ENCODE measurements at regions of chr12 and their contacts with region 1.

Region 1: DNA sequence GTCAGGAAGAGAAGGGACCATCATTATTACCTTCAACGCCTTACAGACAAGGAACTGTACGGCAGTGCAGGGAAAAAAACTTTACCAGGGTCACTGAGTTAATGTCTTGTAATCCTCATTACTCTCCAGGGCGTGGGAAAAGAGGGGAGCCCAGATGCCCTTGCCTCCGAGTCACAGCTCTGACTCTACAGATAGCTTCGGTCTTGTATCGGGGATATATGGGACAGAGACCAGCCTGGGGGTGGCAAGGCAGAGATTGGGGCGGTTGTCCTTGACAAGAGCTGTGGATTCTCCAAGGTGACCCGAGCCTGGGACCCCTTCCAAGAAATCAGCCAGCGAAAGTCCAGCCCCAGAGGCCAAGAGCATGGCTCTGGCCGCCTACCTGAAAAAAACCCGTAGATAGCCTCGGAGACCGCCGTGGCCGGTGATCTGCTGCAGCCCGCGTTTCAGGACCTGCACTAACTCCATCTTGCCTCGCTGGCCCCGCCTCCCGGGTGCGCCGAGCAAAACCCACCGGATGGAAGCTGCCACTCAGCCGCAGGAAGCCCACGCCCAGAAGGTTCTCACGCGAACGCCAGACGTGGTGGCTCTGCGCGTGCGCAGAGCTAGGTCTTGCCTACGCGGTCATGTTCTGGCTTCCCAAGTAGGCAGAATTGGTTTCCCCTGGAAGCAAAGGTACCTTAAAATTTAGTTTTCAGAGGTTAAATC is at the start of gene NDUFA12:
- DNase-seq: peak; percentile 90 to 99 (median 93)
- ATAC-seq: peak; percentile 100
- H3K4me3 ChIP-seq: peak within 1 kb of the TSS; percentile 80
- H3K4me3 Mint-ChIP-seq: peak within 1 kb of the TSS; percentile 96
- H3K27ac ChIP-seq: peak within 1 kb of the TSS; percentile 66 to 76
- H3K27ac Mint-ChIP-seq: peak within 1 kb of the TSS; percentile 87
- H3K4me1 ChIP-seq: peaks cover 29% of the 10 kb centered on the region
- H3K4me1 Mint-ChIP-seq: peaks cover 55% of the 10 kb centered on the region
- H3K27me3 ChIP-seq: no peaks in the 10 kb centered on the region
- H3K27me3 Mint-ChIP-seq: no peaks in the 10 kb centered on the region
- CTCF ChIP-seq: no peak
- total RNA-seq, gene NDUFA12: 43.3 to 43.7 TPM

Region 2: GRCh38 chr12:94987801-94988200 is 15.6 kb before region 1 on chr12:
- CTCF ChIA-PET with region 1: interaction called, 4 read pairs
- POLR2A ChIA-PET with region 1: interaction called, 51 read pairs
- intact Hi-C with region 1: loop called (anchors 2 kb)
- DNase-seq: peak in 3 of 14 experiments; percentile 70 to 79 (median 76)
- ATAC-seq: peak; percentile 57
- H3K4me3 ChIP-seq: no peak overlapping the region
- H3K4me3 Mint-ChIP-seq: peak overlapping the region; percentile 56
- H3K27ac ChIP-seq: peak overlapping the region; percentile 54 to 64
- H3K27ac Mint-ChIP-seq: peak overlapping the region; percentile 97
- H3K4me1 ChIP-seq: peaks cover 62% of the 10 kb centered on the region
- H3K4me1 Mint-ChIP-seq: peaks cover 74% of the 10 kb centered on the region
- H3K27me3 ChIP-seq: no peaks in the 10 kb centered on the region
- H3K27me3 Mint-ChIP-seq: no peaks in the 10 kb centered on the region
- CTCF ChIP-seq: no peak

Region 3: GRCh38 chr12:95143621-95144205 is 140.3 kb after region 1 on chr12:
- CTCF ChIA-PET with region 1: no interaction called
- POLR2A ChIA-PET with region 1: no interaction called
- intact Hi-C with region 1: no loop called
- DNase-seq: no peak
- ATAC-seq: no peak
- H3K4me3 ChIP-seq: no peak overlapping the region
- H3K4me3 Mint-ChIP-seq: no peak overlapping the region
- H3K27ac ChIP-seq: no peak overlapping the region
- H3K27ac Mint-ChIP-seq: no peak overlapping the region
- H3K4me1 ChIP-seq: no peaks in the 10 kb centered on the region
- H3K4me1 Mint-ChIP-seq: no peaks in the 10 kb centered on the region
- H3K27me3 ChIP-seq: no peaks in the 10 kb centered on the region
- H3K27me3 Mint-ChIP-seq: no peaks in the 10 kb centered on the region
- CTCF ChIP-seq: no peak

Region 4: GRCh38 chr12:95217377-95218149 is 214.2 kb after region 1 on chr12 and contains the starts of genes FGD6 and VEZT:
- CTCF ChIA-PET with region 1: interaction called, 6 read pairs
- POLR2A ChIA-PET with region 1: interaction called, 10 read pairs
- intact Hi-C with region 1: loop called (anchors 5 to 10 kb)
- DNase-seq: peak; percentile 94 to 99 (median 98)
- ATAC-seq: peak; percentile 90
- H3K4me3 ChIP-seq: peak within 1 kb of the TSS; percentile 86
- H3K4me3 Mint-ChIP-seq: peak within 1 kb of the TSS; percentile 94
- H3K27ac ChIP-seq: peak within 1 kb of the TSS; percentile 95 to 96
- H3K27ac Mint-ChIP-seq: peak within 1 kb of the TSS; percentile 88
- H3K4me1 ChIP-seq: peaks cover 12% of the 10 kb centered on the region
- H3K4me1 Mint-ChIP-seq: peaks cover 47% of the 10 kb centered on the region
- H3K27me3 ChIP-seq: no peaks in the 10 kb centered on the region
- H3K27me3 Mint-ChIP-seq: peaks cover 4% of the 10 kb centered on the region
- CTCF ChIP-seq: peak; percentile 65
- total RNA-seq, gene FGD6: 1.5 TPM
- total RNA-seq, gene VEZT: 52.6 to 57.2 TPM

Region 5: DNA sequence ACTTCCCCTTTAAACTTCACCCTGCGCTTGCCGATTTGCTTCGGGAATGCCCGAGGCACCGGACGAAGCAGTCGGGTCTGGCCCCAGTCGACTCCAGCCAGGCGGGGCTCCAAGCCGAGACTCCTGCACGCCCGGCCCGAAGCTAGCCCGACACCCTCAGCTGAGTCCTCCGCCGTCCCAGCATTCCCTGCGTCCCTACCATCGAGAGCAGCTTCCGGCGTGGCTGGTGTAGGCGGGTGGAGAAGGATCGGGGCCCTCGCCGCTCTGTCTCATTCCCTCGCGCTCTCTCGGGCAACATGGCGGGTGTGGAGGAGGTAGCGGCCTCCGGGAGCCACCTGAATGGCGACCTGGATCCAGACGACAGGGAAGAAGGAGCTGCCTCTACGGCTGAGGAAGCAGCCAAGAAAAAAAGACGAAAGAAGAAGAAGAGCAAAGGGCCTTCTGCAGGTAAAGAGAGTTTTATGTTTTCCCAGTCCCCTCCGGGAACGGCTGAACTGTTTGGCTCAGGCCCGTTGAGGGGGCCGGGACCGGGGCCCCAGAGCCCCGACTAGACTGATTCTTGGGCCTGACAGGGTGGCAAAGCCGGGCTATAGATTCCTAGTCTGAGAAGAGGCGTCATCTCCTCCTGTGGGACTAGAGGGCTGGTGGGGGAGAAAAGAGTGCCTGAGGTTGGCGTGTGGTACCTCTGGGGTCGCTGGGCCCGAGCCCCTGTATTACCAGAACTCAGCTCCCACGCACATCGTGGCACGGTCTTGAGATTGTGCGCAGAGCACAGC is 470.7 kb after region 1 on chr12 and contains the start of gene METAP2:
- CTCF ChIA-PET with region 1: no interaction called
- POLR2A ChIA-PET with region 1: interaction called, 16 read pairs
- intact Hi-C with region 1: loop called in 1 of 2 experiments (anchors 5 kb)
- DNase-seq: peak; percentile 82 to 95 (median 88)
- ATAC-seq: peak; percentile 96
- H3K4me3 ChIP-seq: peak within 1 kb of the TSS; percentile 92
- H3K4me3 Mint-ChIP-seq: peak within 1 kb of the TSS; percentile 100
- H3K27ac ChIP-seq: peak within 1 kb of the TSS; percentile 56 to 79
- H3K27ac Mint-ChIP-seq: peak within 1 kb of the TSS; percentile 92
- H3K4me1 ChIP-seq: peaks cover 32% of the 10 kb centered on the region
- H3K4me1 Mint-ChIP-seq: peaks cover 67% of the 10 kb centered on the region
- H3K27me3 ChIP-seq: no peaks in the 10 kb centered on the region
- H3K27me3 Mint-ChIP-seq: no peaks in the 10 kb centered on the region
- CTCF ChIP-seq: no peak
- total RNA-seq, gene METAP2: 60.2 to 66.3 TPM

Region 6: GRCh38 chr12:96035278-96036236 is 1032.2 kb after region 1 on chr12 and contains the start of gene LTA4H:
- CTCF ChIA-PET with region 1: no interaction called
- POLR2A ChIA-PET with region 1: no interaction called
- intact Hi-C with region 1: loop called in 1 of 2 experiments (anchors 10 kb)
- DNase-seq: peak; percentile 92 to 99 (median 96)
- ATAC-seq: peak; percentile 93
- H3K4me3 ChIP-seq: peak within 1 kb of the TSS; percentile 89
- H3K4me3 Mint-ChIP-seq: no peak within 1 kb of the TSS
- H3K27ac ChIP-seq: peak within 1 kb of the TSS; percentile 59 to 60
- H3K27ac Mint-ChIP-seq: no peak within 1 kb of the TSS
- H3K4me1 ChIP-seq: peaks cover 20% of the 10 kb centered on the region
- H3K4me1 Mint-ChIP-seq: peaks cover 11% of the 10 kb centered on the region
- H3K27me3 ChIP-seq: no peaks in the 10 kb centered on the region
- H3K27me3 Mint-ChIP-seq: no peaks in the 10 kb centered on the region
- CTCF ChIP-seq: no peak
- total RNA-seq, gene LTA4H: 43.0 to 44.0 TPM